Gastrocnemius medialis (tissue), 4 donors: ENCODE measurements at regions of chr12 and their contacts with region 1.

Region 1: GRCh38 chr12:71216725-71217579 is 59.2 kb upstream of the TSPAN8 start:
- DNase-seq: no peak
- ATAC-seq: no peak
- H3K4me3 ChIP-seq: no peak overlapping the region
- H3K27ac ChIP-seq: no peak overlapping the region
- H3K4me1 ChIP-seq: no peaks in the 10 kb centered on the region
- H3K27me3 ChIP-seq: no peaks in the 10 kb centered on the region
- CTCF ChIP-seq: peak in 3 of 5 experiments; percentile 25 to 40 (median 32)
- POLR2A ChIP-seq: no peak

Region 2: DNA sequence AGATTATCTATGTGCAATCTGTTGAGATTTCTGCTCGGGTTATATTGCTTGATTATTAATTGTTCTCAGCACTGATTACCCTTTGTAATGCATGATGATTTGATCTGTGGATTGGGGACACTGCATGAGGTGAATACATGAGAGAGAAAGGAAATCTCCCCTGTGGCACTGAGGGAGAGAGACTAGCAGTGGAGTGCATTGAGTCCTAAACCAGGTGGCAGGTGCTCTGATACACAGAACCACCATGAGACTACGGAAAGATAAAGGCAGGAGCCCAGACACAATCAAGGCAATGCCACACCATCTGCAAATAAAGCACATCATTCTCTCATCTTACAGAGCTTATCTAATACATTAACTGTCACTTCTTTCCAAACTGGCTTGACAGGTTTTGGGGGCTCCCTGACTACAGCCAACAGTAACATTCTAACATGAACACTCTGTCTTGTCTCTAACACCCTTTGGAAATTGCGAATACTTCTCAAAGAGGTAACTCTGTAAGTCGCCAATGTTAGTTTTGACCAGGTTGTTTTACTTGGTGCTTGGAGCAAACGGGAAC is 21.5 kb before region 1 on chr12:
- in situ Hi-C with region 1: no loop called
- intact Hi-C with region 1: no loop called
- DNase-seq: no peak
- ATAC-seq: no peak
- H3K4me3 ChIP-seq: no peak overlapping the region
- H3K27ac ChIP-seq: no peak overlapping the region
- H3K4me1 ChIP-seq: no peaks in the 10 kb centered on the region
- H3K27me3 ChIP-seq: no peaks in the 10 kb centered on the region
- CTCF ChIP-seq: no peak
- POLR2A ChIP-seq: no peak

Region 3: DNA sequence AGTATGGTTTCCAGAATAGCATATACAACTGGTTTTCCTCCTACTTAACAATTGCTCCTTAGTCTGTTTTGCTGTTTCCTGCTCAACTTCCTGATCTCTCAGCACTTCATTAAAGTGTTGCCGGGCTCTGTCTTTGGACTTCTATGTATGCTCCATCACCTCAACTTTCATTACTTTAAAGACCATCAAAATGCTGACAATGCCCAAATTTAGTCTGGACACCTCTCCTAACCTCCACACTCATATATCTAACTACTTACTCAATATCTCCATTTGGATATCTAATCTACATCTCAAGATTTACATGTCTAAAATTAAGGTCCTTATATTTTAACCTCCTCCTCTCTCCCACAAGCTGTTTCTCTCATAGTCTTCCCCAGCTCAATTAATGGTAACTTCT is 168.2 kb after region 1 on chr12:
- in situ Hi-C with region 1: loop called in 1 of 4 experiments (anchors 10 kb)
- intact Hi-C with region 1: no loop called
- DNase-seq: no peak
- ATAC-seq: no peak
- H3K4me3 ChIP-seq: no peak overlapping the region
- H3K27ac ChIP-seq: no peak overlapping the region
- H3K4me1 ChIP-seq: no peaks in the 10 kb centered on the region
- H3K27me3 ChIP-seq: no peaks in the 10 kb centered on the region
- CTCF ChIP-seq: no peak
- POLR2A ChIP-seq: no peak

Region 4: DNA sequence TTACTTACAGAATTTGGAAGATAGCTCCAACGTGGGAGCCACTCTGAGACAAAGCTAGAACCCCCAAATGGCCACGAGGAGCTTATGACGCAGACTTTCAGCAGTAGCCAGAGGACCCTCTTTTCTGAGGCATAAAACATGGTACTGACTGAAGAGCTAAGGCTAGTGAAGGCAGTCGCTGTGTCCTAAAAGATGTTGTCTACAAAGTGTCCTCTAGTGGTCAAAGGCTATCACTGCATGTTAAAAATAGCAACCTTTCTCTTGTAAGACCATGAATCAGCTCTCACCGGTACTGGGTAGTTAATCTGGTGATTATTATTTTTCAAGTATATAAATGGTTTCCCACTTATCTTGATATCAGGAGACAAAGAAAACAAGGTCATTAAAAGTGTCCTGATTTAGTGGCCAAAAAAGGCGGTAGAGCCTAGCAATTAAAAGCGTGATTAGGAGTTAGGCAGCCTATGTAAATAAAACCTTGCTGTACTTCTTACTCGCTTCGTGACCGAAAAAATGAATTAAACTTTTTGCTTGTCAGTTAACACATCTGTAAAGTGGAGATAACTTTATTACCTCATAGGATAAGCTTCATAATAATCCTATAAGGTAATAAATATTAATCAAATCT is 175.7 kb after region 1 on chr12:
- in situ Hi-C with region 1: loop called in 1 of 4 experiments (anchors 10 kb)
- intact Hi-C with region 1: loop called (anchors 2 kb)
- DNase-seq: no peak
- ATAC-seq: peak; percentile 86 to 98
- H3K4me3 ChIP-seq: no peak overlapping the region
- H3K27ac ChIP-seq: peak overlapping the region in 1 of 4 donors; percentile 20
- H3K4me1 ChIP-seq: no peaks in the 10 kb centered on the region
- H3K27me3 ChIP-seq: no peaks in the 10 kb centered on the region
- CTCF ChIP-seq: peak; percentile 57 to 75 (median 72)
- POLR2A ChIP-seq: no peak

Region 5: GRCh38 chr12:71636704-71637115 is 419.8 kb after region 1 on chr12:
- in situ Hi-C with region 1: no loop called
- intact Hi-C with region 1: loop called (anchors 10 kb)
- DNase-seq: no peak
- ATAC-seq: no peak
- H3K4me3 ChIP-seq: no peak overlapping the region
- H3K27ac ChIP-seq: no peak overlapping the region
- H3K4me1 ChIP-seq: no peaks in the 10 kb centered on the region
- H3K27me3 ChIP-seq: no peaks in the 10 kb centered on the region
- CTCF ChIP-seq: peak in 4 of 5 experiments; percentile 22 to 69 (median 58)
- POLR2A ChIP-seq: no peak

Region 6: DNA sequence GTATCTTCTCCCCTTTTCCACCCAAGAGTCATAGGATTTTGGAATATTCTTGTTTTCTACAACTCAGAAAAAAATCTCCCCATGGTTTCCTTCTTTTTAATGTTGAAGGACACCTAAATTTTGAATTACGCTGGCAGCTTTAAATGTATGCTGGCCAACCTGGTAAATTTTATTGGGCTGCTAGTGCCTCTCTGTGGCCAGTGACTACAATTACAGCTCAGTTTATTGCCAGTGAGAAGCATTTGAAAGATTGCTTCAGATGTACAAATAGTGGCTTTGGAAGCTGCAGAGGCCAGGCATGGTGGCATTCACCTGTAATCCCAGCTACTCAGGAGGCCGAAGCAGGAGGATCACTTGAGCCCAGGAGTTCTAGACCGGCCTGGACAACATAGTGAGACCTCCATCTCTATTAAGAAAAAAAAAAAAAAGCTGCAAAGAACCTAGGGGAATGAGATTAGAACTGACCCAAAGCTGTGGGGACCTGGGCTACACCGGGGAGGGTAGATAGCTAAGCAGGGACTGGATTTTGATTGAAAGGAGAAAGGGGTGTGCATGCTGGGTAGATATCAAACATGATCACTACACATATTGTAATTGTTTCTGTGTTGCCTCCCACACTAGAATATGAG is 530.1 kb after region 1 on chr12:
- in situ Hi-C with region 1: no loop called
- intact Hi-C with region 1: loop called (anchors 5 kb)
- DNase-seq: peak in 1 of 2 donors; percentile 16
- ATAC-seq: peak; percentile 97 to 98
- H3K4me3 ChIP-seq: no peak overlapping the region
- H3K27ac ChIP-seq: no peak overlapping the region
- H3K4me1 ChIP-seq: peaks cover 0 to 3% of the 10 kb centered on the region in 2 donors
- H3K27me3 ChIP-seq: no peaks in the 10 kb centered on the region
- CTCF ChIP-seq: peak; percentile 43 to 81 (median 70)
- POLR2A ChIP-seq: no peak